ENCODE measurements at regions of chr9 and their contacts with region 1.

Region 1: GRCh38 chr9:89466451-89467277 is 31.2 kb downstream of the SEMA4D start:
- DNase-seq: peak; percentile 83
- ATAC-seq: peak; percentile 74
- H3K4me3 ChIP-seq: peak overlapping the region; percentile 55; the same call in 1 of the 2 replicates
- H3K27ac ChIP-seq: peak overlapping the region; percentile 99
- H3K4me1 ChIP-seq: peaks cover 88% of the 10 kb centered on the region
- H3K27me3 ChIP-seq: no peaks in the 10 kb centered on the region
- CTCF ChIP-seq: no peak
- EP300 ChIP-seq: peak; percentile 42 to 48; a peak in 1 of 4 replicates
- POLR2A ChIP-seq: 0 out of 2 replicates have a peak, but pooled peaks have one; percentile 31
- RAD21 ChIP-seq: no peak

Region 2: GRCh38 chr9:89418882-89419640 is 47.6 kb before region 1 on chr9:
- CTCF ChIA-PET with region 1: interaction called, 5 read pairs
- POLR2A ChIA-PET with region 1: interaction called, 6 read pairs
- RAD21 ChIA-PET with region 1: interaction called, 12 read pairs
- SMC1A ChIA-PET with region 1: interaction called, 16 read pairs
- in situ Hi-C with region 1: no loop called
- intact Hi-C with region 1: no loop called
- DNase-seq: no peak
- ATAC-seq: peak; percentile 87
- H3K4me3 ChIP-seq: peak overlapping the region; percentile 62; the same call in 1 of the 2 replicates
- H3K27ac ChIP-seq: peak overlapping the region; percentile 97
- H3K4me1 ChIP-seq: peaks cover 67% of the 10 kb centered on the region
- H3K27me3 ChIP-seq: no peaks in the 10 kb centered on the region
- CTCF ChIP-seq: no peak
- EP300 ChIP-seq: no peak
- POLR2A ChIP-seq: peak; percentile 51
- RAD21 ChIP-seq: no peak

Region 3: GRCh38 chr9:89442981-89443814 is 23.5 kb before region 1 on chr9:
- CTCF ChIA-PET with region 1: no interaction called
- POLR2A ChIA-PET with region 1: interaction called, 7 read pairs
- RAD21 ChIA-PET with region 1: interaction called, 16 read pairs
- SMC1A ChIA-PET with region 1: interaction called, 17 read pairs
- in situ Hi-C with region 1: no loop called
- intact Hi-C with region 1: no loop called
- DNase-seq: no peak
- ATAC-seq: peak; percentile 77
- H3K4me3 ChIP-seq: peak overlapping the region; percentile 3; the same call in 1 of the 2 replicates
- H3K27ac ChIP-seq: peak overlapping the region; percentile 63
- H3K4me1 ChIP-seq: peaks cover 51% of the 10 kb centered on the region
- H3K27me3 ChIP-seq: no peaks in the 10 kb centered on the region
- CTCF ChIP-seq: no peak
- EP300 ChIP-seq: no peak
- POLR2A ChIP-seq: no peak; the same call in 1 of the 2 replicates
- RAD21 ChIP-seq: no peak

Region 4: DNA sequence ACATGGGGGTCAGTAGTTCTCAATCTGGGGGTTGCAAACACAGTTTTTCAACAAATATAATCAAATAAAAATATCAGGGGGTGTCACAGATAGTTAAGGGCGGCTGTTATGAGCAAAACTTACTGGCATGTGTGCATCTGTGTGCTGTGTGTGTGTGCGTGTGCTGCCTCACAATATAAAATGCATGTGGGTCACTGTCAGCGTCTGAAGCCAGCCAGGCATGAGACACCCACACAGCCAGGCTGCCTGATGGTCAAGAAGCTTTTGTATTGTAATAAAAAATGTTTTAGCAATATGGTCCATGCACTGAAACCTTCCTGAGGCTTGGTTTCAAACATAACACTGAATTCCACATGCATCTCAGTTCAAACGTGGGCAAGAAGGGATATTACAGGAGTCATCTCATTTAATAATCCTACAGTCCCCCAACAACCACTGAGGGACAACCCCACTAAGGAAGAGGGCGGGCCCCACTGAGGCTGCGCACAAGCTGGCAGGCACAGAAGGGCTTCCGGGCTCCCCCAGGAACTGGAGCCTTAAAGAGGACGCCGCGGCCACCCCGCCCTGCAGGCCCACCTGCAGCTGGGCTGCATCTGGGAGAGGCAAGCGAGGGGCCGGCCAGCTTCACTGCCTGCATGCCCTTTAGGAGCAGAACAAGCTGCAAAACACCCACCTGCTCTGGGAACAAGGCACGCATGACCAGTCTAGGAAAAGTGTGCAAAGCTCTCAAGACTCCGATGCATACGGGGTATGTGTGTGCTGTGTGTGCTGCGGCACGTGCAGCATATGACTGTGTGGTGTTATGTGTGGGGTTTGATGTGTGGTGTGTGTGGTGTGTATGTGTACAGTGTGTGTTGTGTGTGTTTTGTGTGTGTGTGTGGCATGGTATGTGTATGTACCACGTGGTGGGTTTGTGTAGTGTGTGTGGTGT is 17.2 kb after region 1 on chr9:
- CTCF ChIA-PET with region 1: interaction called, 5 read pairs
- POLR2A ChIA-PET with region 1: interaction called, 16 read pairs
- RAD21 ChIA-PET with region 1: interaction called, 9 read pairs
- SMC1A ChIA-PET with region 1: interaction called, 9 read pairs
- in situ Hi-C with region 1: no loop called
- intact Hi-C with region 1: loop called (anchors 2 kb)
- DNase-seq: no peak
- ATAC-seq: peak; percentile 93
- H3K4me3 ChIP-seq: peak overlapping the region; percentile 68
- H3K27ac ChIP-seq: peak overlapping the region; percentile 26
- H3K4me1 ChIP-seq: peaks cover 50% of the 10 kb centered on the region
- H3K27me3 ChIP-seq: no peaks in the 10 kb centered on the region
- CTCF ChIP-seq: no peak
- EP300 ChIP-seq: no peak
- POLR2A ChIP-seq: no peak
- RAD21 ChIP-seq: no peak

Region 5: DNA sequence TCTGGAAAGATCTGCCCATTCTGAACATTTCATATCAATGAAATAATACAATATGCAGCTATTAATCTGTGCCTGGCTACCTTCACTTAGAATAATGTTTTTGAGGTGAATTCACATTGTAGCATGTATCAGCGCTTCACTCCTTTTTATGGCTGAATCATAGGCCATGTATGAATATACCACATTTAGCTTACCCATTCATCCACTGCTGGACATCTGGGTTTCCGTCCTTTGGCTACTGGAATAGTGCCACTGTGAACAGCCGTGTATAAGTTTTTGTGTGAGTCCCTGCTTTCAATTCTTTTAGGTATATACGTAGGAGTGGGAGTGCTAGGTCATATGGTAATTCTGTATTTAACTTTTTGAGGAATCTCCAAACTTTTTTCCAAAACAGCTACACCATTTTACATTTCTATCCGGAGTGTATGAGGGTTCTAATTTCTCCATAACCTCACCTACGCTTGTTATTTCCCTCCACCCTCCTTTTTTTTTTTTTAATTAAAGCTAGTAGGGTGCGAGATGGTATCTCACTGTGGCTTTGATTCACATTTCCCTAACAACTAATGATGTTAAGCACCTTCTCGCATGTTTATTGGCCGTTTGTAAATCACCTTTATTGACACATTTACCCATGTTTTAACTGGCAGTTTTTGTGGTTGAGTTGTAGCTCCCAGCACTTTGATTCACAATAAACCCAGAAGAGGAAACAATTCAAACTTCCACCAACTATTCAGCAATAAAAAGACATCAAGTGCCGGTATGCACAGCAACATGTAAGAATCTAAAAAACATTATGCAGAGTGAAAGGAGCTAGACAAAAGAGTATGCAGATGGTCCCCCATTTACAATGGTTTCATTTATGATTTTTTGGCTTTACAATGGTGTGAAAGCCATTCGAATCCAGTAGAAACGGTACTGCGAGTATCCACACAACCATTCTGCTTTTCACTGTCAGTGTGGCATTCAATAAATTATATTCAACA is 23.2 kb after region 1 on chr9:
- CTCF ChIA-PET with region 1: interaction called, 5 read pairs
- POLR2A ChIA-PET with region 1: interaction called, 16 read pairs
- RAD21 ChIA-PET with region 1: interaction called, 10 read pairs
- SMC1A ChIA-PET with region 1: interaction called, 9 read pairs
- in situ Hi-C with region 1: no loop called
- intact Hi-C with region 1: loop called (anchors 2 kb)
- DNase-seq: no peak
- ATAC-seq: peak; percentile 37
- H3K4me3 ChIP-seq: peak overlapping the region; percentile 9; the same call in 1 of the 2 replicates
- H3K27ac ChIP-seq: peak overlapping the region; percentile 30
- H3K4me1 ChIP-seq: peaks cover 51% of the 10 kb centered on the region
- H3K27me3 ChIP-seq: no peaks in the 10 kb centered on the region
- CTCF ChIP-seq: no peak
- EP300 ChIP-seq: no peak
- POLR2A ChIP-seq: no peak
- RAD21 ChIP-seq: no peak

Region 6: GRCh38 chr9:89522261-89522958 is 55.7 kb after region 1 on chr9:
- CTCF ChIA-PET with region 1: interaction called, 3 read pairs
- POLR2A ChIA-PET with region 1: interaction called, 3 read pairs
- RAD21 ChIA-PET with region 1: no interaction called
- SMC1A ChIA-PET with region 1: interaction called, 8 read pairs
- in situ Hi-C with region 1: no loop called
- intact Hi-C with region 1: loop called (anchors 2 kb)
- DNase-seq: peak; percentile 83
- ATAC-seq: peak; percentile 95
- H3K4me3 ChIP-seq: peak overlapping the region; percentile 24; the same call in 1 of the 2 replicates
- H3K27ac ChIP-seq: peak overlapping the region; percentile 85
- H3K4me1 ChIP-seq: peaks cover 49% of the 10 kb centered on the region
- H3K27me3 ChIP-seq: no peaks in the 10 kb centered on the region
- CTCF ChIP-seq: no peak
- EP300 ChIP-seq: 0 out of 4 replicates have a peak, but pooled peaks of 1 of the 2 experiments have one; percentile 49
- POLR2A ChIP-seq: peak; percentile 51; the same call in 1 of the 2 replicates
- RAD21 ChIP-seq: no peak